H1 (cell line): ENCODE measurements at regions of chr12 and their contacts with region 1.

Region 1: GRCh38 chr12:132638541-132639418 is 20.2 kb downstream of the P2RX2 start:
- DNase-seq: peak in 1 of 2 experiments; percentile 60
- H3K4me3 ChIP-seq: no peak overlapping the region
- H3K27ac ChIP-seq: no peak overlapping the region
- H3K4me1 ChIP-seq: no peaks in the 10 kb centered on the region
- H3K27me3 ChIP-seq: no peaks in the 10 kb centered on the region
- CTCF ChIP-seq: peak in 2 of 3 experiments; percentile 48 to 90; a peak in 3 of 4 replicates
- EP300 ChIP-seq: no peak
- POLR2A ChIP-seq: no peak
- RAD21 ChIP-seq: peak in 1 of 2 experiments; percentile 38; a peak in 2 of 4 replicates

Region 2: GRCh38 chr12:132572801-132573760 is 65.7 kb before region 1 on chr12:
- CTCF ChIA-PET with region 1: no interaction called
- POLR2A ChIA-PET with region 1: no interaction called
- DNase-seq: no peak
- H3K4me3 ChIP-seq: no peak overlapping the region
- H3K27ac ChIP-seq: no peak overlapping the region
- H3K4me1 ChIP-seq: no peaks in the 10 kb centered on the region
- H3K27me3 ChIP-seq: no peaks in the 10 kb centered on the region; a peak in 2 of 7 replicates
- CTCF ChIP-seq: no peak
- EP300 ChIP-seq: no peak
- POLR2A ChIP-seq: no peak
- RAD21 ChIP-seq: no peak

Region 3: GRCh38 chr12:132622437-132623334 is 16.1 kb before region 1 on chr12:
- CTCF ChIA-PET with region 1: interaction called, 28 read pairs
- POLR2A ChIA-PET with region 1: interaction called, 7 read pairs
- DNase-seq: no peak
- H3K4me3 ChIP-seq: no peak overlapping the region
- H3K27ac ChIP-seq: no peak overlapping the region
- H3K4me1 ChIP-seq: peaks cover 0 to 2% (median 0%) of the 10 kb centered on the region in 4 experiments; a peak in 3 of 7 replicates
- H3K27me3 ChIP-seq: peaks cover 6 to 20% (median 13%) of the 10 kb centered on the region in 4 experiments
- CTCF ChIP-seq: no peak
- EP300 ChIP-seq: no peak
- POLR2A ChIP-seq: no peak
- RAD21 ChIP-seq: no peak

Region 4: GRCh38 chr12:132651444-132652100 is 12.8 kb after region 1 on chr12:
- CTCF ChIA-PET with region 1: interaction called, 61 read pairs
- POLR2A ChIA-PET with region 1: interaction called, 3 read pairs
- DNase-seq: no peak
- H3K4me3 ChIP-seq: no peak overlapping the region
- H3K27ac ChIP-seq: no peak overlapping the region
- H3K4me1 ChIP-seq: no peaks in the 10 kb centered on the region
- H3K27me3 ChIP-seq: no peaks in the 10 kb centered on the region
- CTCF ChIP-seq: no peak
- EP300 ChIP-seq: no peak
- POLR2A ChIP-seq: no peak
- RAD21 ChIP-seq: no peak